Heart left ventricle (tissue), 16 donors: ENCODE measurements at regions of chr14 and their contacts with region 1.

Region 1: DNA sequence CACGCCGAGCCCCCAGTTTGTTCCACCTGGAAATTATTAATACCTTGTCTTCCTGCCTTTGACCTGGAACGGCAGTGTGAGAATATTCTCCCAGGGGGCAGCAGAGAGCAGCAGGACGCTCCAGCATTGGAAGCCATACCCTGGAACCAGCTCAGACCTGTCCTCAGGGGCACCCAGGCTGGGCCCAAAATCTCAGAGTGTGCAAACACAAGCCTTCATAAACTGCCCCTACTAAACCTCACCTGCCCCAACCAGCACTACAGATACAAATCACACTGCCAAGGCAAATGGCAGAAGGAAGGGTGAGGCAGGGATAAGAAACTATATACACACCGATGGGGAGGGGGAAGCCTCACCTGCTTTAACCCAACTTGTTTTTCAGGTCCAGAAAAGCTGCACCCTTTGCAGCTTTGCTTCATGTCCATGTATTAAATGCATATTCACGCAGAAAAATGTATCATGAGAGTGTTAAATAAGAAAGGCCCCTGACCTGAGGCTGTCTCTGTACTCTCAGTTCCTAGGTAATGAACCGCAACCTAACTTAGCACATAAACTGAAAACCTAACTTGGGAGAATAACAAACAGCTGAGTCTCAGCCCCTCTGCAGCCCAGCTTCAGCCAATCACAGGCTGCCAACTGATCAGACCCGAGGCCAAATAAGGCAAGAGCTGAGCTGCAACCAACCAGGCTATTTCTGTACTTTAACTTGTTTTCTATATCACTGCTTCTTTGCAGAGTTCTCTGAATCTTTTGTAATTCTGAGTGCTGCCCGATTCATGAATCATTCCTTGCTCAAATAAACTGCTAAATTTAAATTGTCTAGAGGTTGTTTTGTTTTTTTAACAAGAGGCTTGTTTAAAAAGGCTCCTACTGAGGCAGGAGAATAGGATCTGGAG is 130.1 kb downstream of the SPTSSA start:
- DNase-seq: peak; percentile 40 to 70 (median 53)
- ATAC-seq: peak; percentile 53 to 89 (median 82)
- H3K4me3 ChIP-seq: no peak overlapping the region
- H3K27ac ChIP-seq: no peak overlapping the region
- H3K4me1 ChIP-seq: peaks cover 0 to 7% (median 1%) of the 10 kb centered on the region in 12 donors
- H3K27me3 ChIP-seq: no peaks in the 10 kb centered on the region
- CTCF ChIP-seq: peak; percentile 58 to 86 (median 73)
- POLR2A ChIP-seq: no peak

Region 2: DNA sequence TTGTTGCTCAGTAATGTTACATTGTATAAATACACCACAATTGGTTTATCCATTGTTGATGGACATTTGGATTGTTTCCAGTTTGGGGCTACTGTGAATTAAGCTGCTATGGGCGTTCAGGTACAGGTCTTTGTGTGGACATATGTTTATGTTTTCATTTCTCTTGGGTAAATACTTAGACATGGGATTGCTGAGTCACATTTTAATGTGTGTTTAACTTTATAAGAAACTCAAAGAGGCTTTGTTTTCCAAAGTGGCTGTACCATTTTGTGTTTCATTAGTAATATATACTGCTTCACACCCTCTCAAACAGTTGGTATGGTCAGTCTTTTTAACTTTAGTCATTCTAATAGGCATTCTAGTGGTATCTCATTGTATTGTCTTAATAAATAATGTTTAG is 94.9 kb before region 1 on chr14:
- intact Hi-C with region 1: no loop called
- DNase-seq: no peak
- ATAC-seq: no peak
- H3K4me3 ChIP-seq: no peak overlapping the region
- H3K27ac ChIP-seq: no peak overlapping the region
- H3K4me1 ChIP-seq: peaks cover 0 to 26% (median 10%) of the 10 kb centered on the region in 12 donors
- H3K27me3 ChIP-seq: peaks cover 0 to 3% (median 0%) of the 10 kb centered on the region in 9 donors
- CTCF ChIP-seq: no peak
- POLR2A ChIP-seq: no peak

Region 3: DNA sequence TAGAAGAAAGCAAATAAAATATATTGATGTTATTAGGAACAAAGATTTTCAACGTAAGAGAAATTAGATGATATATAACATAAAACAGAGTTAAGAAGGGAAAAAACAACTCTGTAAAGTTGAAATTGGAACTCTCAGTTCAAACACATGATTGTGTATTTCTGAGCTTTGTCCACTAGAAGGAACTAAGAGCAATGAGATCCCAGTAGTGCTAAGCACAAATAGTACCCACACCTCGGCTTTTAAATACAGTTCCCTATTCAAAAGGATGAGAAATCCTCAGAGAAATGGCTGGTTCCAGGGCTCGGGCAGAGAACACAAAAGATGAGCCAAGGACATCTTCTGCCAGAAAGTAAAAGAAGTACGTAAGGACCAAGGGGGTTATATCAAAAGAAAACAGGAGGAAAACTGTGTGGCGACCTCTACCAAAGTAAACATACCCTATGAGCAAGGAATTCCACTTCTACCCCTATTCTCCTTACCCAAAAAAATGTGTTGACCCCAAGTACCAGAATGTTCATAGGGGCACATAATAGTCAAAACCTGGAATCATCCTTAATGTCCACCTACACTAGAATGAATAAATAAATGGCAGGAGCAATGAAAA is 33.4 kb after region 1 on chr14:
- intact Hi-C with region 1: no loop called
- DNase-seq: no peak
- ATAC-seq: no peak
- H3K4me3 ChIP-seq: no peak overlapping the region
- H3K27ac ChIP-seq: no peak overlapping the region
- H3K4me1 ChIP-seq: peaks cover 0 to 35% (median 0%) of the 10 kb centered on the region in 12 donors
- H3K27me3 ChIP-seq: peaks cover 0 to 7% (median 0%) of the 10 kb centered on the region in 9 donors
- CTCF ChIP-seq: peak in 5 of 12 donors; percentile 17 to 37 (median 32)
- POLR2A ChIP-seq: no peak

Region 4: DNA sequence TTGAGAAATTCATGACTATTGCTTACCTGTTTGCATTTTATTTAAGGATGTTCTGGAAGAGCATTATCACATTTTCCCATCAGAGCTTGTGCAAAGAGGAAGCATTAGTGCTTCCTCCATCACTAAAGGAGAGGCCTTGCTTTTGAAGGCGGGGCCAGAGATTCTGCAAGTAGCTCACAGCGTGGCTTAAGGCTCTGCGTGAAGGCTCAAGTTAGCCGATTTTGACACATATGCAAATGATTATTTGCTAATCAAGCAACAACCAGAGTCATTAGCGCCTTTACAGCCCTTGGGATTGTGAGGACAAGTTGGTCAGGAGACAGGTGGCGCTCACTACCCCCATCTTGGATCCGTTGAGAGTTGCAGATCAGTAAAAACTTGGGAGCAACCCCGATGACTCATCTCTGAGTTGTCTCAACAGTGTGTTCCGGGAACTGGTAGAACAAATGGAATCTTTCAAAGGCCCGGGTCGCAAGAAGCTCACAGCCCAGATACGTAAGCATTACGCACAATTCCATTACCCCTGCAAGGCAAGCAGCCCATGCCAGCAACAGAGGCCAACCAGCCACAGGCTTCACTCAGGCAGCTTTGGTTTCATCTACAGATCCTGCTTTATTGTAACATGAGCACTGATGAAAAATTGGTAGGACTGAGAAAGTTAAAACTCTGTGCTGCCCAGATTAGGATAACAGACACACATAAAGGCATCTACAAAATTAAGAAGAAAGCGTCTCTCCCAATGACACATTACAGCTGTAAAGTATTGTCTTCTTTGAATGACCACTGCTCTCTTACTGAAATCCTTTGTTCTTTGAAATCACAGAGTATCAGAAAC is 164.9 kb after region 1 on chr14:
- intact Hi-C with region 1: loop called in 8 of 10 experiments (anchors 2 to 10 kb)
- DNase-seq: peak; percentile 64 to 82 (median 77)
- ATAC-seq: peak; percentile 90 to 95 (median 94)
- H3K4me3 ChIP-seq: peak overlapping the region in 3 of 12 donors; percentile 10 to 23 (median 10)
- H3K27ac ChIP-seq: peak overlapping the region; percentile 27 to 88 (median 74)
- H3K4me1 ChIP-seq: peaks cover 0 to 18% (median 2%) of the 10 kb centered on the region in 12 donors
- H3K27me3 ChIP-seq: no peaks in the 10 kb centered on the region
- CTCF ChIP-seq: peak in 4 of 12 donors; percentile 19 to 41 (median 36)
- POLR2A ChIP-seq: no peak

Region 5: GRCh38 chr14:34539407-34540180 is 207.6 kb after region 1 on chr14 and contains the start of gene EAPP:
- intact Hi-C with region 1: loop called in 1 of 10 experiments (anchors 5 kb)
- DNase-seq: peak; percentile 97 to 99 (median 98)
- ATAC-seq: peak; percentile 99
- H3K4me3 ChIP-seq: peak within 1 kb of the TSS; percentile 63 to 99 (median 82)
- H3K27ac ChIP-seq: peak within 1 kb of the TSS; percentile 73 to 96 (median 88)
- H3K4me1 ChIP-seq: peaks cover 0 to 26% (median 19%) of the 10 kb centered on the region in 12 donors
- H3K27me3 ChIP-seq: no peaks in the 10 kb centered on the region
- CTCF ChIP-seq: peak in 2 of 12 donors; percentile 17 to 20
- POLR2A ChIP-seq: peak; percentile 44 to 93
- total RNA-seq, gene EAPP: 11.4 to 28.5 (median 19.4) TPM